Cardiac septum (tissue), 1 donor: ENCODE measurements at regions of chr4 and their contacts with region 1.

Region 1: DNA sequence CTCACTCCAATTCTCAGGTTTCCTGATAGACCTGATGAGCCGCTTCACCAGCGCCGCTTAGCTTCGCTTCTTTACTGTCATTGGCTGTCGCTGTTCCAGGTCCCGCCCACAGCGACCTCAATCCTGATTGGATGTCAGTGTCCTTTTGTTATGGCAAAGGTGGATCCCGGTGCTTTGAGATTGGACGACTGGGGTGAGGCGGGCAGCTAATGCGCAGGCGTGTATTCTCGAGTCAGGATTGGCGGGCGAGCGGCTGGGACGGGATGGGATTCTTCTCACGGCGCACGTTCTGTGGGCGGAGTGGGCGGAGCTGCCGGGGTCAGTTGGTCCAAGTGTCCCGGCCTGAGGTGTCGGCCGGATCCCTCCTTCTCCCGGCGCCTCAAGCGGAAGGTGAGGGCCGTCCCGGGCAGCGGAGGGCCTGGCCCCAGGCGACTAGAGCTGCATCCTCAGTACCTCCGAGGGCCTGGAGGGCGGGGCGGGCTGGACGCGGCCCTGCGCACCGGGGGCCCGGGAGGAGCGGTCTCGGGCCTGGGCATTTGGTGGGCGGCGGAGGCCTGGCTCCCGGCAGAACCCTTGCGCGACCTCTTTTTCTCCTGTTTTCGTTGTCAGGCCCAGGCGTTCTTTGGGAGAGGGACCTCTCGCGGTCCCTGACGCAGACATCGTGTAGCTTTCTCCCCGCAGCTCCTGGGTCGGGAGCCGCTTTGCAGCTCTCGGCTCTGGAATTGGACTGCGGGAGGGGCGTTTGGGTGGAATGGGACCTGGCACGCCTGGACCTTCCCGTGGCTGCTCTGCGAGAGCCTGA is at the start of gene SCOC:
- DNase-seq: peak; percentile 100
- total RNA-seq, gene SCOC: 73.0 TPM

Region 2: GRCh38 chr4:140427106-140427961 is 53.8 kb after region 1 on chr4 and contains the start of gene CLGN:
- intact Hi-C with region 1: loop called (anchors 2 kb)
- DNase-seq: peak; percentile 87
- total RNA-seq, gene CLGN: 44.7 TPM

Region 3: GRCh38 chr4:140523857-140524742 is 150.6 kb after region 1 on chr4 and contains the start of gene ELMOD2:
- intact Hi-C with region 1: loop called (anchors 1 kb)
- DNase-seq: peak; percentile 100
- total RNA-seq, gene ELMOD2: 18.3 TPM

Region 4: DNA sequence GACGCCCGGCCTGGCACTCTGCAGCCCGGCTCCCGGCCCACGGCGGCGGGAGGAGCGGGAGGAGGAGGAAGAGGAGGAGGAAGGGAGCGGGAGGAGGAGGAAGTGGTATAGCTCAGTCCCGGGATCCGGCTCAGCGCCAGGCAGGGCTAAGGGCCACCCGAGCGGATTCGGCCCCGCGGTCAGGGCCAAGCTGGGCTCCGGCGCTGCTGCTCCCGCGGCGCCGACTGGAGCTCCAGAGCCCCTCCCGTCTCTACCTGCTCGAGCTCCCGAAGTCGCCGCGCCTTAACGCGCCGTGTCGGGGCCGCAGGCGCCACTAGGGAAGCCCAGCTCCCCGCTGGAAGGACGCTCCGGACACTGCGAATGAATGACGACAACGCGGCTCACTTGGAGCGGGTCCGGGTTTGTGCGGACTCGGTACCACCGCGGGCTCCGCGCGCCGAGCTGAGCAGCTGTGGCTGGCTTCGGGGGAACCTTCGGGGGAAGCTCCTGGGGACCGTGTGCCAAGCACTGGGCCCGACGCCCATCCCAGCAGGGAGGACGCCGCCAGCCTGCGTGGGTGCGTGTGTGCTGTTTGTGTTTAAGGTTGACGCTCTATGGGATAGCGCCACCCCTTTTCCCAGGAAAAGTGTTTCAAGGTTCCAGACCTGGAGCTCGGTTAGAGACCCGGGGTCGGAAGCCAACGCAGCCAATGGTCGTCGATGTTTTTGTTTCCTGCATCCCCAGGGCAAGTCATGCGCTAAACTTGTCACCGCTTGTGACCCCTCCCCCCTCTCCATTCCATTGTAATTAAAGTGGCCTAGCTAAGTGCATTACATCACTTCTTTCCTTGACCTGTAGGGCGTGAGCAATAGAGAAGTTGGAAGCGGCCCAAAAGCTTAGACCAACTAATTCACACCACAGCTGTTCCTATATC is 383.0 kb after region 1 on chr4 and contains the start of gene TBC1D9:
- intact Hi-C with region 1: loop called (anchors 5 kb)
- DNase-seq: peak; percentile 88
- total RNA-seq, gene TBC1D9: 15.0 TPM